PC-9 (cell line): ENCODE measurements at regions of chr5 and their contacts with region 1.

Region 1: DNA sequence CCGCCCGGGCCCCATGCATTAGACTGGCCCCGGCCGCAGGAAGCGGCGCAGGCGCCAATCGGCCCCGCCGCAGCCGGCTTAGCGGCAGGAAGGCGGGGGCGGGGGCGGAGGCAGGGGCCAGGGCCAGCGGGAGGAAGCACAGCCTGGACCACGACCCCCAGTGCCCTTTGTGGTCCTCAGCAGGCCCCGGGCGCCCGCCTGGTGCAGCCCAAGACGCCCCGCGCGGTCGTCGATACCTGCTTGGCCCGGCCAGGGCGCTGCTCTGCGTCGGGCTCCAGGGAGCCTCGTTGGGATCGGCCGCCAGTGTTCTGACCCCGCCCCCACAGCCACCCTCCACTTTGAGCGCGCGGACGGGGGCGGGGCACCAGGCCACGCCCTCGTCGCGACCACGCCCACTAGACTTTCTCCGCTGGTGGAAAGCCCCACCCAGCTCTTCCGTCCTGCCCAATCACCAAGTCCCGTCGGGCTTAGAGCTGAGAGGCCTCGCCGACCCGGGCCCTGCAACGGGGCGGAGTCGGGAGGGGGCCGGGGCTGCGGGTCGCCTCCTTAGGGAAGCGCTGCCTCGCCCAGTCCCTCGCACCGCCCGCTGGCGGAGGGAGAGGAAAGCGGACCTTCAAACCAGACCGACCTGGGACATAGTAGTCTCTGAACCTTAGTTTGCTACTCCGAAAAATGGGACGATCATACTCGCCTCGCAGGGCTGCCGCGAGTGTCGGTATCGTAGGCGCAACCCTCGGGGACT is at the start of gene PDLIM7:
- DNase-seq: peak; percentile 88 to 99
- H3K4me3 ChIP-seq: peak within 1 kb of the TSS; percentile 85
- H3K27ac ChIP-seq: peak within 1 kb of the TSS; percentile 65
- H3K4me1 ChIP-seq: peaks cover 41% of the 10 kb centered on the region
- H3K27me3 ChIP-seq: no peaks in the 10 kb centered on the region
- CTCF ChIP-seq: no peak
- total RNA-seq, gene PDLIM7: 167 and 202 TPM in 2 replicates

Region 2: DNA sequence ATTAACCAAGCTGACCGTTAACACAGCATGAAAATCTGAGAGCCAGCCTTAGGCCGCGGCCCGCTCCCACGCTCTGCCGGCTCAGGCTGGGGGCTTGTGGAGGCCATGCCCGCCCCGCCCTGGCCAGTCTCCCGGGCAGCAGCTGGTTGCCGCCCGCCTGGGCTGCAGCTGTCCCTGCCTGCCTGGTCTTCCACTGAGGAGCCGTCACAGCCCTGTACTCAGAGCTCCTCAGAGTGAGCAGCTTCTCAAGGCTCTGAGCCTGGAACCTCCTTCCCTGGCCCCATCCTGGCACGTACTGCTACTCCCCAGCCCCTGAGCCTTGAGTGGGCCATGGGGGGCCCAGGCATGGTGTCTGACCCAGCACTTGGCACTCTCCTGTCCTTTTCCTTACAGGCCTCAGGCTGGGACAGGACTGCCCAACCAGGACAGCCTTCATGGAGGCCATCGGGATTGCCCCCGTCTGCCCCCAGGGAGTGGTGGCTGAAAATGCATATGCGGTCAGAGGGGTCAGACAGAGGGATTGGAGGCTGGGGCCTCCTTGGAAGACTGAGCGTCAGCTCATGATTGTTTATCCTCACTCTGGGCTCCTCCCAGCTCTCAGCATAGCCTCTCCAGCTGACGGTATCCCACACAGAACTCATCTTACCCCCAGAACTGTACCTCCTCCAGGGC is 398.9 kb before region 1 on chr5:
- CTCF ChIA-PET with region 1: no interaction called
- POLR2A ChIA-PET with region 1: interaction called, 13 read pairs
- intact Hi-C with region 1: no loop called
- DNase-seq: no peak
- H3K4me3 ChIP-seq: no peak overlapping the region
- H3K27ac ChIP-seq: no peak overlapping the region
- H3K4me1 ChIP-seq: no peaks in the 10 kb centered on the region
- H3K27me3 ChIP-seq: no peaks in the 10 kb centered on the region
- CTCF ChIP-seq: no peak

Region 3: DNA sequence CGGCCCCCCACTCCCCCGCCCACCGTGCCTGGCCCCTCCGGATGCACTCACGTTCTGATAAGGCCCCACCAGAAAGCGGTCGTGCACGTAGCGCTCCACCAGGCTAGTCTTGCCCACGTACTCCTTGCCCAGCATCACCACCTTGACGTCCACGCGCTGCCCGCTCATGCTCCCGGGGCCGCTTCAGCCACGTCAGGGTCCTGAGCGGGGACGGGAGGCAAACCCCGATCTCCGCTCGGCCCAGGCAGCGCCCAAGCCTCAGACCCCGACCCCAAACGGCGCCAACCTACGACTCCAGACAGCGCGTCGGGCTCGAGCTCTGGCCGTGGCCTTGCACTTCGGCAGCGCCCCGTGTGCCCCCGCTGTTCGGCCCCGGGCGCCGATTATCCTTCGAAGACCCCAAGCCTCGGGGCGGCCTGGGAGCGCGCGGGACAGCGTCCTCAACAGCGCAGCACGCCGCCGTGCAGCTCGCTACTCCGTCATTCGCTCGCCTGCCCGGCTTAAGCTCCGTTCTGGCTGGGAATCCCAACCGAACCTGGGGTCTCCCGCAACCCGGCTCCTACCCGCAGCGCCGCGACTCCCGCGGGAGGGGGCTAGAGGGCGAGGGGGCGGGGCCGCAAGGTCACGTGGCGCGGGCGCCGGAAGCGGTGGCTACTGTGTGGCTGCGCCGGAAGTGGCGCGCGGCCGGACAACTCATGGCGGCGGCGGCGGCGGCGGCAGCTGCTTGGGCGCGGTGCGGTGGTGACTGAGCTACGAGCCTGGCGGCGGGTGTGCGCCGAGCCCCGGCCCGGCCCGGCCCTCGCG is 194.1 kb before region 1 on chr5 and contains the starts of genes PRELID1 and RAB24:
- CTCF ChIA-PET with region 1: no interaction called
- POLR2A ChIA-PET with region 1: interaction called, 13 read pairs
- intact Hi-C with region 1: no loop called
- DNase-seq: peak; percentile 61 to 91
- H3K4me3 ChIP-seq: peak within 1 kb of the TSS; percentile 100
- H3K27ac ChIP-seq: peak within 1 kb of the TSS; percentile 39
- H3K4me1 ChIP-seq: peaks cover 40% of the 10 kb centered on the region
- H3K27me3 ChIP-seq: no peaks in the 10 kb centered on the region
- CTCF ChIP-seq: no peak; the same call in 1 of the 2 replicates
- total RNA-seq, gene PRELID1: 189 and 209 TPM in 2 replicates
- total RNA-seq, gene RAB24: 16.9 and 25.2 TPM in 2 replicates

Region 4: GRCh38 chr5:177390363-177391300 is 106.8 kb before region 1 on chr5:
- CTCF ChIA-PET with region 1: interaction called, 3 read pairs
- POLR2A ChIA-PET with region 1: interaction called, 7 read pairs
- intact Hi-C with region 1: loop called (anchors 1 kb)
- DNase-seq: peak; percentile 78 to 89
- H3K4me3 ChIP-seq: peak overlapping the region; percentile 25; the same call in 1 of the 2 replicates
- H3K27ac ChIP-seq: peak overlapping the region; percentile 96
- H3K4me1 ChIP-seq: peaks cover 35% of the 10 kb centered on the region
- H3K27me3 ChIP-seq: no peaks in the 10 kb centered on the region
- CTCF ChIP-seq: peak; percentile 97

Region 5: GRCh38 chr5:177454397-177455035 is 42.9 kb before region 1 on chr5:
- CTCF ChIA-PET with region 1: interaction called, 12 read pairs
- POLR2A ChIA-PET with region 1: interaction called, 3 read pairs
- intact Hi-C with region 1: loop called (anchors 1 kb)
- DNase-seq: peak; percentile 71 to 96
- H3K4me3 ChIP-seq: peak overlapping the region; percentile 77
- H3K27ac ChIP-seq: 0 out of 2 replicates have a peak overlapping the region, but pooled peaks have one; percentile 26
- H3K4me1 ChIP-seq: 0 out of 2 replicates have a peak, but pooled peaks cover 5% of the 10 kb centered on the region
- H3K27me3 ChIP-seq: no peaks in the 10 kb centered on the region
- CTCF ChIP-seq: peak; percentile 82